Activated naive CD4-positive, alpha-beta T cell treated with anti-CD3 and anti-CD28 coated beads for 36 hours (primary cell): ENCODE measurements at regions of chr3 and their contacts with region 1.

Region 1: DNA sequence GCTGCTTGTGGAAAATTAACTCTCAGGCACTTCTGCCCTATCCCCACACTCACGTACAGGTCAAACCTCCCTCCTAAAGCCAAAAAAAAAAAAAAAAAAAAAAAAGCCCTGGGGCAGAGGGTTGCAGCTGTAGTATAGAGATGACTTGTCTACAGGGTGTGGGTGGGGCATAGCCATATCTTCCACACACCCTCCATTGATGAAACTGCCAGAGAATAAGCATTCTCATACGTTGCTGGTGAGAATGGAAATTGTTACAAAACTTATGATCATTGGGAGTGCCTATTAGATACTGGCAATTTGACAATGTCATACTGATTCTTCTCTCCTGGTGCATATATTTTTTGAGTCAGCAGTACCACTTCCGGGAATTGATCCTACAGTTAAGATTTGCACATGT is 11.0 kb upstream of the CTNNB1 start:
- DNase-seq: peak; percentile 51
- H3K4me3 Mint-ChIP-seq: no peak overlapping the region
- H3K27ac Mint-ChIP-seq: no peak overlapping the region
- H3K4me1 Mint-ChIP-seq: peaks cover 29% of the 10 kb centered on the region
- H3K27me3 Mint-ChIP-seq: peaks cover 1% of the 10 kb centered on the region

Region 2: GRCh38 chr3:41158947-41159346 is 29.3 kb before region 1 on chr3:
- CTCF ChIA-PET with region 1: no interaction called
- intact Hi-C with region 1: loop called (anchors 1 kb)
- DNase-seq: peak; percentile 37
- H3K4me3 Mint-ChIP-seq: no peak overlapping the region
- H3K27ac Mint-ChIP-seq: peak overlapping the region; percentile 67
- H3K4me1 Mint-ChIP-seq: peaks cover 22% of the 10 kb centered on the region
- H3K27me3 Mint-ChIP-seq: no peaks in the 10 kb centered on the region